Dorsolateral prefrontal cortex (tissue), 120 donors: ENCODE measurements at regions of chr4 and their contacts with region 1.

Region 1: GRCh38 chr4:40316782-40317635 is 18.1 kb upstream of the CHRNA9 start:
- DNase-seq: peak in 4 of 10 donors; percentile 25 to 46 (median 39)
- H3K4me3 ChIP-seq: peak overlapping the region in 56 of 59 donors; percentile 19 to 62 (median 44)
- H3K27ac ChIP-seq: peak overlapping the region in 57 of 59 donors; percentile 7 to 92 (median 67)
- H3K27me3 ChIP-seq: no peaks in the 10 kb centered on the region
- CTCF ChIP-seq: peak; percentile 59 to 85 (median 75)

Region 2: GRCh38 chr4:39458505-39459300 is 858.3 kb before region 1 on chr4 and contains the starts of genes LIAS and RPL9:
- intact Hi-C with region 1: loop called in 1 of 2 experiments (anchors 10 kb)
- DNase-seq: peak; percentile 88 to 97 (median 93)
- H3K4me3 ChIP-seq: peak within 1 kb of the TSS; percentile 63 to 99 (median 91)
- H3K27ac ChIP-seq: peak within 1 kb of the TSS; percentile 3 to 98 (median 92)
- H3K27me3 ChIP-seq: no peaks in the 10 kb centered on the region
- CTCF ChIP-seq: peak in 17 of 56 donors; percentile 3 to 30 (median 14)
- total RNA-seq, gene LIAS: 16.1 to 30.6 (median 22.3) TPM
- total RNA-seq, gene RPL9: 295 to 743 (median 520) TPM

Region 3: GRCh38 chr4:40395908-40396793 is 79.1 kb after region 1 on chr4:
- intact Hi-C with region 1: no loop called
- DNase-seq: no peak
- H3K4me3 ChIP-seq: no peak overlapping the region
- H3K27ac ChIP-seq: no peak overlapping the region
- H3K27me3 ChIP-seq: no peaks in the 10 kb centered on the region
- CTCF ChIP-seq: no peak

Region 4: DNA sequence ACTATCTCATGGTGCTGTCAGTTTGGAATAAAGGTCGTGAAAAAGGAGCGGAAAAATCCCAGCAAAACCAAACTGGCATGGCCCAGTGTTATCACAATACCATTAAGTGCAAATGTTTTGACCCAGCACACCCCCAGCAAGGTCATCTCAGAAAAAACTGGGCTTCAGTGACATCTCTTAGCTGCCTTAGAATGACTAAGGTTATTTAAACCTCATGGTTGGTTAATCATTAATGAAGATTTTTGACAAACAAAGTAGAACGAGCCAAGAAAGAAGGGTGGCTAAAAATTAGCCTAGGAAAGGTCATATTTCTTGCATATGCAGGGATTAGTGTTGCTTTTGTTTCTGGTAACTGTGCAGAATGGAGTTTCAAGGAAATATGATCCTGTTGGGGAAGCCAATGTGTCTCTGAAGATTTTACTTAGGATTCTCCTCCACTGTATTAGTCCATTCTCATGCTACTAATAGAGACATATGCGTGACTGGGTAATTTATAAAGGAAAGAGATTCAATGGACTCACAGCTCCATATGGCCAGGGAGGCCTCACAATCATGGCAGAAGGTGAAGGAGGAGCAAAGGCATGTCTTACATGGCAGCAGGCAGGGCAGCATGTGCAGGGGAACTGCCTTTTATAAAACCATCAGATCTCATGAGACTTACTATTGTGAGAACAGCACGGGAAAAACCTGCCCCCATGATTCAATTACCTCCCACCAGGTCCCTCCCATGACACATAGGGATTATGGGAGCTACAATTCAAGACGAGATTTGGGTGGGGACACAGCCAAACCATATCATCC is 101.6 kb after region 1 on chr4:
- intact Hi-C with region 1: no loop called
- DNase-seq: no peak
- H3K4me3 ChIP-seq: no peak overlapping the region
- H3K27ac ChIP-seq: no peak overlapping the region
- H3K27me3 ChIP-seq: peaks cover 0 to 4% (median 0%) of the 10 kb centered on the region in 45 donors
- CTCF ChIP-seq: no peak